HepG2 (cell line): ENCODE measurements at regions of chr1 and their contacts with region 1.

Region 1: GRCh38 chr1:15617175-15617880 is at the start of gene DDI2:
- DNase-seq: peak; percentile 86
- ATAC-seq: peak; percentile 88
- H3K4me3 ChIP-seq: peak within 1 kb of the TSS; percentile 87 to 100 (median 97)
- H3K27ac ChIP-seq: peak within 1 kb of the TSS; percentile 95
- H3K4me1 ChIP-seq: peaks cover 52% of the 10 kb centered on the region
- H3K27me3 ChIP-seq: no peaks in the 10 kb centered on the region; a peak in 1 of 5 replicates
- CTCF ChIP-seq: no peak
- EP300 ChIP-seq: peak; percentile 32 to 40; a peak in 1 of 4 replicates
- POLR2A ChIP-seq: peak; percentile 79 to 91
- RAD21 ChIP-seq: 0 out of 2 replicates have a peak, but pooled peaks have one; percentile 70
- total RNA-seq, gene DDI2: 25.7 and 34.0 TPM in 2 replicates

Region 2: DNA sequence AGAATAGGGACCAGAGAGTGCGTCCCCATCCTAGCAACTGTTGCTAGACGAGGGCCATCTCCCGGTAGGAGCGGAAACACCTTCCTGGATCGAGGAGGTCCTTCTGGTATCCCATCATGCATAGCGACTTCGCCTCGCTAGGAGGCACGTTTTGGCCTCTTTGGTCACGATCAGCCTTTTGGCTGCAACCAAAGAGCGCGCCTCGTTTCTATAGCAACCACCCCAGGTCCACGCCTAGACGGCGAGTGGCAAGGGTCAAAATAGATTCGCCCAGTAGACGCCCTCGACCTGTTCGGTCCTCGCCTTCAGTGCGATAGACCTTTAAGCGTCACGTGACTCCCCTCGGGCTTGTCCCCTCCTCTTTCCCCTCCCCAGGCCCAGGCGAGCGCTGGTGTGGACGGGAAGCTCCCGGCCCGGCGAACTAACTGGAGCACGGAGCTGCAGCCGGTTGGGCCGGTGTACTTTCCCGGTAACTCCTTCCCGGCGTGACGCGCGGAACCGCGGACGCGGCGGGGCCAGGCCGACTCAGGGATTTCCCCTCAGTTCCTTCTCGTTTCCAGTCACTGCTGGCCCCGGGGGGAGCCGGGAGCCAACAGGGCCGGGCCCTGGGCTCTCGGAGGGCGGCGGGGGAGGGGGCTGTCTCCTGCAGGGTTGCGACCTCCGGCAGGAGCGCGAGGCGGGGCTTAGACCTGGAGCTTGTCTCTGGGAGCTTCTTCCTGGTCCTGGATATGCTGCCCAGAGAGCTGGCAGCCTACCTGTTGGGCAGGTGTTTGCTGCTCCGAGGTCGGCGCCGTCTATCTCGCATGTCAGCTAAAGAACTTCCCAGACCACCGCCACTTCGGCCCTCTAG is 90.6 kb before region 1 on chr1 and contains the start of gene DNAJC16:
- CTCF ChIA-PET with region 1: no interaction called
- POLR2A ChIA-PET with region 1: interaction called, 16 read pairs
- in situ Hi-C with region 1: no loop called
- intact Hi-C with region 1: no loop called
- DNase-seq: peak; percentile 100
- ATAC-seq: peak; percentile 83
- H3K4me3 ChIP-seq: peak within 1 kb of the TSS; percentile 69 to 96 (median 89)
- H3K27ac ChIP-seq: peak within 1 kb of the TSS; percentile 91
- H3K4me1 ChIP-seq: peaks cover 36% of the 10 kb centered on the region
- H3K27me3 ChIP-seq: no peaks in the 10 kb centered on the region; a peak in 1 of 5 replicates
- CTCF ChIP-seq: peak; percentile 65
- EP300 ChIP-seq: no peak
- POLR2A ChIP-seq: peak; percentile 81 to 85
- RAD21 ChIP-seq: no peak; the same call in 1 of the 2 replicates
- total RNA-seq, gene DNAJC16: 10.7 and 15.4 TPM in 2 replicates

Region 3: DNA sequence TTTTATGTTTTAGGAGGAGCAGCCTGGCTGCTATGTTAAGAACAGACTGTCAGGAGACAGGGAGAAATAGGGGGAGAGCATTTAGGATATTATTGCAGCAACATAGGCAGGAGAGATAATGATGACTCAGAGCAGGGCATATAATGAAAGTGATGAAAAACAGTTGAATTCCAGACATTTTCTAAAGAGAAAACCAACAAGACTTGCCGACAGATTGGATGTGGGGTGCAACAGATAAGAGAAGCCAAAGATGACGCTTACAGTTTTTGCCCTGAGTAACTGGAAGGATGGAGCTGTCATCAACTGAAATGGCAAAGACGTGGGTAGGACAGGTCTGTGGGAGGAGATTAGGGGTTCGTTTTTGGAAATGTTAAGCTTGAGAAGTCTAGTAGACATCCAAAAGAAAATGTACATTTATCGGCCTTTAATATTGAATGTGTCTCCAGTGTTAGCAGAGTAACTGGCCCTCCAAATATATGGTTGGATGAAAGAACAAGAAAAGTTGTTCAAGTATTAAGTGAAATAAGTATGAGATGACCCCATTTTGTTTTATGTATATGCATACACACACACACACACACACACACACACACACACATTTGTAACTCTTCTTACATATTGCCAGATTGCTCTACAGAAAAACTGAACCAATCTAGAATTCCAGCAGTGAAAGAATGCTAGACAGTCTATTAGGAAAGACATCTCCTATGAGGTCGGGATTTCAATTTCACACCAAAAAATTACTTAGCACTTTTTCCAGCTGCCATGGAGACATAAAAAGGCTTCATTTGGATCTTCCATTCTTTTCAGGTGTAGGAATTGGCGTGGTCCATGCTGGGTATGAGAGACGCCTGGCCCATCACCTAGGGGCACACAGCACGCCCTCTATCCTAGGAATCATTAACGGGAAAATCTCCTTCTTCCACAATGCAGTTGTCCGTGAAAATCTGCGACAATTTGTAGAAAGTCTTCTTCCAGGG is 73.4 kb before region 1 on chr1:
- CTCF ChIA-PET with region 1: no interaction called
- POLR2A ChIA-PET with region 1: no interaction called
- in situ Hi-C with region 1: no loop called
- intact Hi-C with region 1: no loop called
- DNase-seq: no peak
- ATAC-seq: no peak
- H3K4me3 ChIP-seq: no peak overlapping the region
- H3K27ac ChIP-seq: no peak overlapping the region
- H3K4me1 ChIP-seq: peaks cover 7% of the 10 kb centered on the region
- H3K27me3 ChIP-seq: no peaks in the 10 kb centered on the region
- CTCF ChIP-seq: no peak
- EP300 ChIP-seq: no peak
- POLR2A ChIP-seq: no peak
- RAD21 ChIP-seq: no peak

Region 4: GRCh38 chr1:15584489-15585363 is 32.6 kb before region 1 on chr1 and contains the start of gene AGMAT:
- CTCF ChIA-PET with region 1: no interaction called
- POLR2A ChIA-PET with region 1: interaction called, 24 read pairs
- in situ Hi-C with region 1: no loop called
- intact Hi-C with region 1: no loop called
- DNase-seq: peak; percentile 91
- ATAC-seq: peak; percentile 93
- H3K4me3 ChIP-seq: peak within 1 kb of the TSS; percentile 72 to 85 (median 84)
- H3K27ac ChIP-seq: peak within 1 kb of the TSS; percentile 100
- H3K4me1 ChIP-seq: peaks cover 47% of the 10 kb centered on the region
- H3K27me3 ChIP-seq: no peaks in the 10 kb centered on the region
- CTCF ChIP-seq: peak; percentile 63
- EP300 ChIP-seq: peak; percentile 80 to 84
- POLR2A ChIP-seq: peak; percentile 88 to 93
- RAD21 ChIP-seq: no peak; the same call in 1 of the 2 replicates
- total RNA-seq, gene AGMAT: 174 and 216 TPM in 2 replicates

Region 5: DNA sequence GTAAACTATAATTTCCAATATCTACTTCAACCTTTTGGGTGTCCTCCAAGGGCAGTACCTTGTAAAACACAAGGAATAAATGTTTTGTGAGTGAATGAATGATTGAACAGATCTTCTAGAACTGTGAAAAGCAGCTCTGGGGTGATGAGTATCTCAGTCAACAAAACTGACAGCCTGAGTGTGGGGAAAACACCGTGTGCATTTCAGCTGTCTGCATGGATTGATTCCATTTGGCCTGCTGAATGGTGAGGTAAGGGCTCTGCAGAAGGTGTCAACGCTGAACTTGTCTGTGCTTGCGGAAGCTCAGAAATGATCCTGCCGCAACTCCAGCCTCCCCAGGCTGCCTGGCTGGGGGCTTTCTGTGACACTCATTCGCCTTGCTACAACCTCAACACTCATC is 25.0 kb before region 1 on chr1:
- CTCF ChIA-PET with region 1: interaction called, 3 read pairs
- POLR2A ChIA-PET with region 1: interaction called, 37 read pairs
- in situ Hi-C with region 1: no loop called
- intact Hi-C with region 1: no loop called
- DNase-seq: no peak
- ATAC-seq: no peak
- H3K4me3 ChIP-seq: no peak overlapping the region
- H3K27ac ChIP-seq: no peak overlapping the region
- H3K4me1 ChIP-seq: peaks cover 30% of the 10 kb centered on the region
- H3K27me3 ChIP-seq: no peaks in the 10 kb centered on the region
- CTCF ChIP-seq: no peak
- EP300 ChIP-seq: no peak
- POLR2A ChIP-seq: no peak
- RAD21 ChIP-seq: no peak

Region 6: GRCh38 chr1:15603050-15603965 is 14.0 kb before region 1 on chr1:
- CTCF ChIA-PET with region 1: no interaction called
- POLR2A ChIA-PET with region 1: interaction called, 188 read pairs
- in situ Hi-C with region 1: no loop called
- intact Hi-C with region 1: loop called (anchors 1 kb)
- DNase-seq: peak; percentile 93
- ATAC-seq: peak; percentile 91
- H3K4me3 ChIP-seq: peak overlapping the region; percentile 69 to 85 (median 70)
- H3K27ac ChIP-seq: peak overlapping the region; percentile 69
- H3K4me1 ChIP-seq: peaks cover 56% of the 10 kb centered on the region
- H3K27me3 ChIP-seq: no peaks in the 10 kb centered on the region; a peak in 1 of 5 replicates
- CTCF ChIP-seq: no peak
- EP300 ChIP-seq: no peak
- POLR2A ChIP-seq: peak; percentile 66 to 87
- RAD21 ChIP-seq: peak; percentile 13; the same call in 1 of the 2 replicates

Region 7: GRCh38 chr1:15671430-15671829 is 54.1 kb after region 1 on chr1:
- CTCF ChIA-PET with region 1: no interaction called
- POLR2A ChIA-PET with region 1: interaction called, 10 read pairs
- in situ Hi-C with region 1: no loop called
- intact Hi-C with region 1: no loop called
- DNase-seq: no peak
- ATAC-seq: no peak; the same call in 2 of the 3 replicates
- H3K4me3 ChIP-seq: no peak overlapping the region
- H3K27ac ChIP-seq: no peak overlapping the region
- H3K4me1 ChIP-seq: peaks cover 12% of the 10 kb centered on the region; the same call in 1 of the 2 replicates
- H3K27me3 ChIP-seq: no peaks in the 10 kb centered on the region
- CTCF ChIP-seq: no peak
- EP300 ChIP-seq: no peak
- POLR2A ChIP-seq: no peak
- RAD21 ChIP-seq: no peak

Region 8: GRCh38 chr1:15684468-15685291 is 67.4 kb after region 1 on chr1:
- CTCF ChIA-PET with region 1: no interaction called
- POLR2A ChIA-PET with region 1: interaction called, 12 read pairs
- in situ Hi-C with region 1: no loop called
- intact Hi-C with region 1: loop called (anchors 10 kb)
- DNase-seq: no peak
- ATAC-seq: peak; percentile 59
- H3K4me3 ChIP-seq: peak overlapping the region; percentile 59 to 92 (median 88)
- H3K27ac ChIP-seq: peak overlapping the region; percentile 52
- H3K4me1 ChIP-seq: peaks cover 62% of the 10 kb centered on the region
- H3K27me3 ChIP-seq: no peaks in the 10 kb centered on the region
- CTCF ChIP-seq: no peak
- EP300 ChIP-seq: no peak
- POLR2A ChIP-seq: no peak
- RAD21 ChIP-seq: no peak

Region 9: DNA sequence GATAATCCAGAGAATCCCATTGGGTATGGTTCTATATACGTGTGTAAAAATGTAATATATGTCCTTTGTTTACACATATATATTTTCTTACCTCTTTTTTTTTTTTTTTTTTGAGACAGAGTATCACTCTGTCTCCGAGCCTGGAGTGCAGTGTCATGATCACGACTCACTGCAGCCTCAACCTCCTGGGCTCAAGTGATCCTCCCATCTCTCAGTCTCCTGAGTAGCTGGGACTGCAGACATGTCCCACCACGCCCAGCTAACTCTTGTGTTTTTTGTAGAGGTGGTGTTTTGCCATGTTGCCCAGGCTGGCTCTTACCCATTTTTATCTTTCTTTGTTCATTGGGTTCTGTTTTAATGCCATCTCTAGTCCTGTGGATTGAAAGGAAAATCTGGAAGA is 299.1 kb after region 1 on chr1:
- CTCF ChIA-PET with region 1: no interaction called
- POLR2A ChIA-PET with region 1: no interaction called
- in situ Hi-C with region 1: no loop called
- intact Hi-C with region 1: no loop called
- DNase-seq: no peak
- ATAC-seq: no peak
- H3K4me3 ChIP-seq: no peak overlapping the region
- H3K27ac ChIP-seq: no peak overlapping the region
- H3K4me1 ChIP-seq: no peaks in the 10 kb centered on the region
- H3K27me3 ChIP-seq: no peaks in the 10 kb centered on the region
- CTCF ChIP-seq: no peak
- EP300 ChIP-seq: no peak
- POLR2A ChIP-seq: no peak
- RAD21 ChIP-seq: no peak